ENCODE measurements at regions of chr19 and their contacts with region 1.

Region 1: GRCh38 chr19:55391702-55392615 is 6.2 kb downstream of the RPL28 start:
- DNase-seq: no peak
- H3K4me3 ChIP-seq: no peak overlapping the region
- H3K27ac ChIP-seq: no peak overlapping the region
- H3K4me1 ChIP-seq: peaks cover 0 to 31% (median 21%) of the 10 kb centered on the region in 4 experiments
- H3K27me3 ChIP-seq: no peaks in the 10 kb centered on the region

Region 2: GRCh38 chr19:55418185-55418584 is 26.2 kb after region 1 on chr19:
- CTCF ChIA-PET with region 1: interaction called, 21 read pairs
- POLR2A ChIA-PET with region 1: no interaction called
- DNase-seq: peak; percentile 78 to 86 (median 82)
- H3K4me3 ChIP-seq: no peak overlapping the region
- H3K27ac ChIP-seq: no peak overlapping the region
- H3K4me1 ChIP-seq: peaks cover 6 to 40% (median 31%) of the 10 kb centered on the region in 4 experiments
- H3K27me3 ChIP-seq: no peaks in the 10 kb centered on the region

Measured in common myeloid progenitor, CD34-positive (primary cell).